Activated CD4-positive, alpha-beta memory T cell treated with anti-CD3 and anti-CD28 coated beads for 36 hours (primary cell): ENCODE measurements at regions of chr21 and their contacts with region 1.

Region 1: DNA sequence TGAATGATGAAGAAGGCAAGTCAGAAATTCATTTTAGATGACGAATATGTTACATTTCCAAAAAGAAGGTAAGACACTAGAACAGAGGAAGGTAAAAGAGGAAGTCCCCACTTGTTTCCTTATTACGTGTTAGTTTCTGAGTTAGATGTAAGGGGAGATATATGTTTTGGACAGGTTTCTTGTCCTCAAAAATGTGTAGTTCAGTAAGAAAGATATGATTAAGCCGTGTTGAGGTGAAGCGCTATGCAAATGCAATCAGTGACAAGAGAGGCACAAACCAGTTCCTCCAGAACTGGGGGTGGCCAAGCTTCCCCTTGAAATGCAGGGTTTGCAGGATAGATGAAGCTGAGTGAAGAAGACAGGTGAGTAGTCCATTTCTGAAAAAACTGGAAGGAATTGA is 293.3 kb upstream of the RUNX1 start:
- DNase-seq: peak; percentile 66
- H3K4me3 Mint-ChIP-seq: peak overlapping the region; percentile 62
- H3K27ac Mint-ChIP-seq: peak overlapping the region; percentile 98
- H3K4me1 Mint-ChIP-seq: peaks cover 52% of the 10 kb centered on the region
- H3K27me3 Mint-ChIP-seq: no peaks in the 10 kb centered on the region

Region 2: DNA sequence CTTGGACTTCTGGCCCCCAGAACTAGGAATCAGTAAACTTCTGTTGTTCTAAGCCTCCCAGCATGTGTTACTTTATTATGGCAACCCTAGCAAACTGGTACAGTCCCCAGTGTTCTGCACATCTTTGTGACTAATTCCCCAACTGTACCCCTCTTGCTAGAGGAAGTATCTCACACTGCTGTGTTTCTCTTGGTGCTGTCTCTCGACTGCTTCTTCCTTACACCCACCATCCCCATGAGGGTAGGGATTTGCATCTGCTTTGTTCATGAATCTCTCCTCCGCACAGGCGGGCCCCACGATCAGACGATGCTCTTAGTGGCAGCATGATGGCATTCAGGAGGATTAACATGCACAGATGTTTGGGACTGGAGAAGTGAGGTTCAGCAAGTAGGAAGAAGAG is 626.9 kb before region 1 on chr21:
- CTCF ChIA-PET with region 1: no interaction called
- POLR2A ChIA-PET with region 1: no interaction called
- intact Hi-C with region 1: loop called (anchors 5 kb)
- DNase-seq: peak; percentile 11
- H3K4me3 Mint-ChIP-seq: no peak overlapping the region
- H3K27ac Mint-ChIP-seq: no peak overlapping the region
- H3K4me1 Mint-ChIP-seq: peaks cover 16% of the 10 kb centered on the region
- H3K27me3 Mint-ChIP-seq: peaks cover 41% of the 10 kb centered on the region

Region 3: DNA sequence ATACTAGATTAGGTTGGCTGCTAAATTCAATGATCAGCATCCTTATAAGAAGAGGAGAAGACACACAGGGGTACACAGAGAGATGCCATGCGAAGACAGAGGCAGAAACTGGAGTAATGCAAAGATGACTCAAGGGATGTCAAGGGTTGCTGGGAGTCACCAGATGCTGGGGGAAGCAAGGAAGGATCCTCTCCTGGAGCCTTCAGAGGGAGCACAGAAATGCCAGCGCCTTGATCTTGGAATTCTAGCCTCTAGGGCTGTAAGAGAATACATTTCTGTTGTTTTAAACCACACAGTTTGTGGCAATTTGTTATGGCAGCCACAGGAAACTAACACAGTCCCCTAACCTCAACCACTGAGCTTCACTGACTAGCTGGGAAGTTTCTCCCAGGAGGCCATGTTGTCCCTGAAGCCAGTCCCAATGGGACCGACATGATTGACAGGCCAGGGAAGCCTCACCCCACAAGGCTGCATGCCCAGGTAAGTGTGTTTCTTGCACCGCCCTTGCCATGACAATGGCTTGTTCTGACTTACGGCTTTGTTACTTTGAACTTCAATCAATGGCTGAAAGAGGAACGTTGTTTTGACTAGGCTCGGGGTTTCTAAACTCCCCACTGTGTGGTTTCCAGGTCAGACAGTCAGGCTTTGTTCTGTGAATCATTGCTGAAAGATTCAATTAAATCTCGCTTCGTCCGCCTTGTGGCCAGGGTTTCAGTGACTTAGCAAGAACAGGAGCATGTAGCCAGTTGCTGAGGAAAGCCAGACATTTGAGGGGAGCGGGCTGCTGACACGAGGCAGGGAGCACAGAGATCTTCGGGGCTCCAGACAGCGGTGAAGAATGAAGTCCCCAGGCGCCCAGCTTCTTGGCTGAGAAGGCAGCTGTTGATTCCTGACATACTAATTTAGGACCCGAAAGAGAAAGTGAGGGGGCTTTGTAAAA is 355.6 kb before region 1 on chr21:
- CTCF ChIA-PET with region 1: no interaction called
- POLR2A ChIA-PET with region 1: no interaction called
- intact Hi-C with region 1: loop called (anchors 2 kb)
- DNase-seq: peak; percentile 92
- H3K4me3 Mint-ChIP-seq: peak overlapping the region; percentile 67
- H3K27ac Mint-ChIP-seq: peak overlapping the region; percentile 90
- H3K4me1 Mint-ChIP-seq: peaks cover 95% of the 10 kb centered on the region
- H3K27me3 Mint-ChIP-seq: no peaks in the 10 kb centered on the region

Region 4: GRCh38 chr21:35138665-35139381 is 203.6 kb before region 1 on chr21:
- CTCF ChIA-PET with region 1: no interaction called
- POLR2A ChIA-PET with region 1: no interaction called
- intact Hi-C with region 1: loop called (anchors 2 kb)
- DNase-seq: peak; percentile 79
- H3K4me3 Mint-ChIP-seq: peak overlapping the region; percentile 68
- H3K27ac Mint-ChIP-seq: peak overlapping the region; percentile 90
- H3K4me1 Mint-ChIP-seq: peaks cover 29% of the 10 kb centered on the region
- H3K27me3 Mint-ChIP-seq: no peaks in the 10 kb centered on the region

Region 5: DNA sequence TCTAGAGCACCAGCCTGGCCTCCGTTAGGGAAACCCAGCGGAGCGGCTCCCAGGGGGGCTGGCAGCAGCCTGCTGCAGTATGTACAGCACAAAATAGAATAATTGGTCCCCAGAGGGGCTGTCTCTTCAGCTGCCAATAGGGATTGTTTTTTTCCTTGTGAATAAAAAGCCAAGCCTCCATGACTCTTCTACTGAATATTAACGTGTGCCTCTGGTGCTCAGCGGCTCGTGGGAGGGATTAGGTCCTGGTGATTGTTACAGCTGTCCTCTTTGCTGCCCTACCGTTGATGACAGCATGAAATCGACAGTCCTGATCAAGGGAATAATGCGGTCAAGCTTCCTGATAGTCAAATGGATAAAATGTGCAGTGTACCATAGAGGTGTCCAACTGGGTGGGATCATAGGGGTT is 102.6 kb before region 1 on chr21:
- CTCF ChIA-PET with region 1: no interaction called
- POLR2A ChIA-PET with region 1: no interaction called
- intact Hi-C with region 1: no loop called
- DNase-seq: no peak
- H3K4me3 Mint-ChIP-seq: no peak overlapping the region
- H3K27ac Mint-ChIP-seq: no peak overlapping the region
- H3K4me1 Mint-ChIP-seq: peaks cover 23% of the 10 kb centered on the region
- H3K27me3 Mint-ChIP-seq: no peaks in the 10 kb centered on the region

Region 6: DNA sequence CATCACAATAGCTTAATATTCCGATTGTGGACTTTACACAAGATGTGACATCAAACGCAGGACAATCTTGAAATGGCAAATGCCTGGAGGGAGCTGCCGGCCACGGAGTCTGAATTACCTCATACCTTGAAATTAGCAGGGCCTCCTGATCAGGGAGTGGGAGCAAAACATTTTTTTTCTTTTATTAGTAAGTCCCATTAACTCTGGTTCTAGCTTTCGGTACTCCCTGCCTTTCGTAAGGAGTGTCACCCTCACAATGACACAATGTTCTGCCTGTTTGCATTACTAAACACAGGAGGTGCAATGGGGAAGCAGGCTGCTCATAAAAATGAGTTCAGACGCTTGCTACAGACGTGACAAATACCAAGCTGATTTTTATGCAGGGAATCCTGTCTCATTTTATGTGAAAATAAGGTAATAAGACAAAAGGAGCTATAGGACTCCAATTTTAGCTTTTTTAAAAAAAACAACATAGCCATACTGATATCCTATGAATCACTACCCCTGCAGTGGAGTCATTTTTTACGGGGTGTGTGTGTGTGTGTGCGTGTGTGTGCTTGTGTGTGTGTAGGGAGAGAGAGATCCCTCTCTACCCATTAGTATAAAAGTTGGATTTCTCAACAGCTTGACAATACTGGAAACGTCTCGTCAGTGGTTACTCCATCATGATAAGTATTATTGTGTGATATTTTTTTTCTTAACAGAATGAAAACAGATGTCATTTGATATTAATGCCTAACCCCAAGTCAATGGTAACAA is 88.3 kb before region 1 on chr21:
- CTCF ChIA-PET with region 1: no interaction called
- POLR2A ChIA-PET with region 1: no interaction called
- intact Hi-C with region 1: loop called (anchors 1 kb)
- DNase-seq: no peak
- H3K4me3 Mint-ChIP-seq: no peak overlapping the region
- H3K27ac Mint-ChIP-seq: no peak overlapping the region
- H3K4me1 Mint-ChIP-seq: peaks cover 43% of the 10 kb centered on the region
- H3K27me3 Mint-ChIP-seq: no peaks in the 10 kb centered on the region

Region 7: GRCh38 chr21:35400233-35400957 is 58.0 kb after region 1 on chr21:
- CTCF ChIA-PET with region 1: no interaction called
- POLR2A ChIA-PET with region 1: no interaction called
- intact Hi-C with region 1: loop called (anchors 2 kb)
- DNase-seq: peak; percentile 37
- H3K4me3 Mint-ChIP-seq: no peak overlapping the region
- H3K27ac Mint-ChIP-seq: no peak overlapping the region
- H3K4me1 Mint-ChIP-seq: peaks cover 24% of the 10 kb centered on the region
- H3K27me3 Mint-ChIP-seq: peaks cover 3% of the 10 kb centered on the region